CD4-positive, alpha-beta T cell (primary cell): ENCODE measurements at regions of chr6 and their contacts with region 1.

Region 1: GRCh38 chr6:99868074-99868702 is 125.8 kb downstream of the MCHR2 start:
- DNase-seq: peak; percentile 46 to 77 (median 58)
- ATAC-seq: peak; percentile 55
- H3K4me3 ChIP-seq: no peak overlapping the region
- H3K4me3 Mint-ChIP-seq: no peak overlapping the region
- H3K27ac ChIP-seq: no peak overlapping the region
- H3K27ac Mint-ChIP-seq: no peak overlapping the region
- H3K4me1 ChIP-seq: peaks cover 5% of the 10 kb centered on the region
- H3K4me1 Mint-ChIP-seq: peaks cover 6% of the 10 kb centered on the region
- H3K27me3 ChIP-seq: peaks cover 0 to 5% of the 10 kb centered on the region in 2 experiments
- H3K27me3 Mint-ChIP-seq: peaks cover 64% of the 10 kb centered on the region
- CTCF ChIP-seq: peak; percentile 83

Region 2: DNA sequence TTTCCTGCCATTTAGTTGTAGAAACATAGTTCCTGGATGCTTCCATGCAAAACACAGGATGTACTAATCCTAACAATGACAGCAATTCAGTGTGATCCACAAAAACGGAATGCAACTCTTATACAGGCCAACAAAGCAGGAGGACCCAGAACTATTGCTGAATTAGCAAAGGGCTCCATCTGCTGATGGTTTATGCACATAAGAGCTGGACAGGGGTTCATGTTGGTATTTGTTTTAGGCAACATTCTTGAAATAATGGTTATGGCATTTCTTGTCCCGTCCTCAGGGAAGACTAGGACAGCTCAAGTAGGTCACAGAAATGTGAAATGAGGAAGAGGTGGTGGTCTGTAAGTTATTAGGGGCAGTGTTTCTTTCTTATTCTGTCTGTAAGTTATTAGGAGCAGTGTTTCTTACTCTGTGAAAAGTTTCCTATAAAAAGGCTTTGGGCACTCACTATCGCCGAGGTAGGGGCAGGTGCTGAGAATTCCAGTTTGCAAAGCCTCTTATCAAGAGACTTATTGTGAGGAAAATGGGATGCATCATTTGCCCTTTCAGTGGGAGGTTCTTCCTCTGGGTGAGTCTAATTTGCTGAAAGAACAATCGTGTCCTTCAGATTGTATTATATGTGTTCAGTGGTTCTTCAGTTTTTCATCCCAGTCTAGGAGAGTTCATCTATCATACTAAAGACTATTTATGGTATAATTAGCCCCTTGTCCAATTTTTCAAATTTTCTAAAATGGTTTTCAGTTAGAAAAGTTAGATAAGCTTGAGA is 45.3 kb before region 1 on chr6:
- CTCF ChIA-PET with region 1: no interaction called
- POLR2A ChIA-PET with region 1: no interaction called
- intact Hi-C with region 1: no loop called
- DNase-seq: peak in 4 of 14 experiments; percentile 2 to 52 (median 42)
- ATAC-seq: no peak
- H3K4me3 ChIP-seq: no peak overlapping the region
- H3K4me3 Mint-ChIP-seq: peak overlapping the region; percentile 68
- H3K27ac ChIP-seq: no peak overlapping the region
- H3K27ac Mint-ChIP-seq: no peak overlapping the region
- H3K4me1 ChIP-seq: no peaks in the 10 kb centered on the region
- H3K4me1 Mint-ChIP-seq: peaks cover 8% of the 10 kb centered on the region
- H3K27me3 ChIP-seq: peaks cover 4 to 11% of the 10 kb centered on the region in 2 experiments
- H3K27me3 Mint-ChIP-seq: peaks cover 43% of the 10 kb centered on the region
- CTCF ChIP-seq: no peak

Region 3: DNA sequence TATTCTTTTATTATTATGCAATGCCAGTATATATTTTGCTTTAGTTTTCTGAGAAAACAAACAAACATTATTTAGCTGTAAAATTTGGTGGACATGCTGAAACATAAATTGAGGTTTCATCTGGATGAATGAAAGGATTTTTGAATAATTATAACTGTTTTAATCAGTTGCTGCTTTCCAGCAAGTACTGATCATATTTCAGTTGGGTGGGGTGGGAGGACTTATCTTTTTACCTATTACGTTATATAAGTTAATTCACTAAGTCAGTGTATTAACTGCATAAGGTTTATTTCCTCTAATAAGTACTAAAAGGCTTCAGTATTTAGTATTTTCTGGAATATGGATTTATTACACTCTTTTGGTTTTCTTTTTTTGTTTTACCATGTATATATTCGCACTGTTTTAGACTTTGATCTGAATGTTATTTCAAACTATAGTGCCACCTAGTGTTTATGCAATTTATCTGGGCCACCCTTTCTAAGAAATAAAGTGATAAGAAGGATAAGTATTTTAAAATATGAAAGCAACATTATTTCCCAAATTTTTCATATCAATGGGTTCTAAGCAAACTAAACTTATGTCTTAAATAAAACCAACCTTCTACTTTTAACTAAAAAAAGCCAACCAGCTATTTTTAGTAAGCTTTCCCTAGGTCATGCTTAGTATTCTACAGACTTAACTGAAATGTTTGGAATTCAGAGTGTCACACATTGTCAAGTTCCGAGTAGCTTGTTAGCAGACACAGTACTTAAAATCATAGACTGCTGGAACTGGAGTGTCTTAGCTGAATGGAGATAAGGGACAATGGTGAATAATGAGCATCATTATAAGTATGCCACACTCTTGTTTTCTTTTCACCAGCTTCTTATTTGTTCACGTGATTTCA is 231.2 kb after region 1 on chr6:
- CTCF ChIA-PET with region 1: interaction called, 6 read pairs
- POLR2A ChIA-PET with region 1: no interaction called
- intact Hi-C with region 1: loop called (anchors 5 kb)
- DNase-seq: peak in 1 of 14 experiments; percentile 15
- ATAC-seq: no peak
- H3K4me3 ChIP-seq: no peak overlapping the region
- H3K4me3 Mint-ChIP-seq: no peak overlapping the region
- H3K27ac ChIP-seq: no peak overlapping the region
- H3K27ac Mint-ChIP-seq: no peak overlapping the region
- H3K4me1 ChIP-seq: no peaks in the 10 kb centered on the region
- H3K4me1 Mint-ChIP-seq: no peaks in the 10 kb centered on the region
- H3K27me3 ChIP-seq: no peaks in the 10 kb centered on the region
- H3K27me3 Mint-ChIP-seq: peaks cover 8% of the 10 kb centered on the region
- CTCF ChIP-seq: peak; percentile 40

Region 4: DNA sequence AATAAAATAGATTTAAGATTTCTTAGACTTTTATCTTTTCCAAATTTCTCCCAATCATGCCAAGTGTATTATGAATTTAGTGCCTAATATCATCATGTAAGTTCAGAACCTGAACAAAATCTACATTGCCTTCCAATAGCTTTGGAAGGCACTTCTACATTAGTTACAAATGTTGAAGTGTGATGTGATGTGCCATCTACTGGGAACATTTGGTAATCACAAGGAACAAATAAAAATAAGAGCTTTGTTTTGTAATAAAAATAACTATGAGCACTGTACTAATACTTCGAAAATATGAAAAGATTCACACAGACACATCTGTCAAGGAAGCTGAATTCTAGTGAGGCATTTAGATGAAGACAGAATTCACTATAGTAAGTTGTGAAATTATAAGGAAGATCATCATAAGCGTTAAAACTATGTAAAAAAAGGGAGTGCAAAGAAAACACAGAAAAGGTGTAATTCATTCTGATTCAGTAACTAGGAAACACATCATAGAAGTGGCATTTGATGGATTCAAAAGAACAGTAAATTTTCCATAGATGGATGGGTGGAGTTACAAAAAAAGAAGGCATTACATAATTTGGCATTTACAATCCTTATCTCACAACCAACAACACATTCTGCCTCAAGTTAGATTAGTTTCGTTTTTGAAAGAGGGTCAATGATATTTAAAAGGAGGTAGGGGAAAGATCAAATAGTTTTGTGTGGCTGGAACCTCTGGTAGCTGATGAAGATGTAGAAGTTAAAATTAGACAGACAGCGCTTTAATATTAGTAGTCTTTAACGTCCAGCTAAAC is 851.9 kb after region 1 on chr6:
- CTCF ChIA-PET with region 1: no interaction called
- POLR2A ChIA-PET with region 1: no interaction called
- intact Hi-C with region 1: loop called in 1 of 2 experiments (anchors 5 kb)
- DNase-seq: peak in 2 of 14 experiments; percentile 7 to 34
- ATAC-seq: no peak
- H3K4me3 ChIP-seq: no peak overlapping the region
- H3K4me3 Mint-ChIP-seq: peak overlapping the region; percentile 20
- H3K27ac ChIP-seq: no peak overlapping the region
- H3K27ac Mint-ChIP-seq: no peak overlapping the region
- H3K4me1 ChIP-seq: no peaks in the 10 kb centered on the region
- H3K4me1 Mint-ChIP-seq: peaks cover 15% of the 10 kb centered on the region
- H3K27me3 ChIP-seq: no peaks in the 10 kb centered on the region
- H3K27me3 Mint-ChIP-seq: no peaks in the 10 kb centered on the region
- CTCF ChIP-seq: peak; percentile 60